CD14-positive monocyte (primary cell): ENCODE measurements at regions of chr9 and their contacts with region 1.

Region 1: DNA sequence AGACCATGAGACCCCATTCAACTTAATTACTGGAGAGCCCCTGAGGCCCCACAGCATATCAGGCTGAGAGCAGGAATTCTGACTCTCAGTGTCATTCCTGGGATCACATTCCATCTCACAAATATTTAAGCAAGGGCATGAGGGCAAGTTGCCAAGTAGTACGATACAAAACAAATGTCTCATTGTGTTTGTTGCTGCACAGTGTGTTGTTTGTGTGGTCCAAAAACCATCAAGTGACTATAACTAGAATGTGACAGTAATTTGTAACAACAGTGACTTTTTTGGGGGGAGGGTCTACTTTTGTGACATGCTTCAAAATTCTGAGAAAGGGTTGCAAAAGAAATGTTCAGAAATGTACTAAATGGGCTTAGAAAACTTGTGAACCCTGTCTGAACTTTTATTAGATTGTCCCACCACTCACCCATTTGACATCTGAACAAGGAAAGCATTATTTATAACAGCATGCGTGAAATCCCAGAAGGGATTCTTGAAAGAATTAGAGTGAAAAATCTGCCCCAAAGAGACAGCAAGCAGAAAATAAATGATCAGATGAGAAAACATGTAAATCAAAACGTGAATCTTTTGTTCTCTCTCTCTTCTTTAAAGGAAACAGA is 347.0 kb downstream of the NTRK2 start:
- DNase-seq: no peak
- H3K4me3 ChIP-seq: no peak overlapping the region
- H3K4me3 Mint-ChIP-seq: no peak overlapping the region
- H3K27ac ChIP-seq: no peak overlapping the region
- H3K27ac Mint-ChIP-seq: no peak overlapping the region
- H3K4me1 ChIP-seq: no peaks in the 10 kb centered on the region
- H3K4me1 Mint-ChIP-seq: no peaks in the 10 kb centered on the region
- H3K27me3 ChIP-seq: no peaks in the 10 kb centered on the region
- H3K27me3 Mint-ChIP-seq: peaks cover 0 to 2% (median 0%) of the 10 kb centered on the region in 3 donors
- CTCF ChIP-seq: no peak

Region 2: GRCh38 chr9:84953797-84954705 is 62.4 kb before region 1 on chr9:
- intact Hi-C with region 1: loop called in 1 of 2 experiments (anchors 10 kb)
- DNase-seq: peak in 1 of 3 donors; percentile 11
- H3K4me3 ChIP-seq: no peak overlapping the region
- H3K4me3 Mint-ChIP-seq: peak overlapping the region in 1 of 2 donors; percentile 47
- H3K27ac ChIP-seq: no peak overlapping the region
- H3K27ac Mint-ChIP-seq: peak overlapping the region in 1 of 7 donors; percentile 11
- H3K4me1 ChIP-seq: no peaks in the 10 kb centered on the region
- H3K4me1 Mint-ChIP-seq: peaks cover 3% of the 10 kb centered on the region
- H3K27me3 ChIP-seq: no peaks in the 10 kb centered on the region
- H3K27me3 Mint-ChIP-seq: peaks cover 3 to 11% (median 9%) of the 10 kb centered on the region in 3 donors
- CTCF ChIP-seq: peak; percentile 67

Region 3: GRCh38 chr9:85443190-85443598 is 426.7 kb after region 1 on chr9:
- intact Hi-C with region 1: no loop called
- DNase-seq: no peak
- H3K4me3 ChIP-seq: no peak overlapping the region
- H3K4me3 Mint-ChIP-seq: no peak overlapping the region
- H3K27ac ChIP-seq: no peak overlapping the region
- H3K27ac Mint-ChIP-seq: no peak overlapping the region
- H3K4me1 ChIP-seq: no peaks in the 10 kb centered on the region
- H3K4me1 Mint-ChIP-seq: no peaks in the 10 kb centered on the region
- H3K27me3 ChIP-seq: no peaks in the 10 kb centered on the region
- H3K27me3 Mint-ChIP-seq: peaks cover 0 to 5% (median 2%) of the 10 kb centered on the region in 3 donors
- CTCF ChIP-seq: no peak